HepG2 (cell line): ENCODE measurements at regions of chr3 and their contacts with region 1.

Region 1: GRCh38 chr3:2283818-2284217 is 185.2 kb downstream of the CNTN4 start:
- DNase-seq: no peak
- ATAC-seq: no peak
- H3K4me3 ChIP-seq: no peak overlapping the region
- H3K27ac ChIP-seq: no peak overlapping the region
- H3K4me1 ChIP-seq: no peaks in the 10 kb centered on the region
- H3K27me3 ChIP-seq: no peaks in the 10 kb centered on the region
- CTCF ChIP-seq: no peak
- EP300 ChIP-seq: no peak
- POLR2A ChIP-seq: no peak
- RAD21 ChIP-seq: no peak

Region 2: GRCh38 chr3:2106438-2106837 is 177.4 kb before region 1 on chr3:
- CTCF ChIA-PET with region 1: no interaction called
- POLR2A ChIA-PET with region 1: no interaction called
- in situ Hi-C with region 1: no loop called
- intact Hi-C with region 1: no loop called
- DNase-seq: no peak
- ATAC-seq: no peak
- H3K4me3 ChIP-seq: no peak overlapping the region
- H3K27ac ChIP-seq: no peak overlapping the region
- H3K4me1 ChIP-seq: no peaks in the 10 kb centered on the region
- H3K27me3 ChIP-seq: no peaks in the 10 kb centered on the region
- CTCF ChIP-seq: no peak
- EP300 ChIP-seq: no peak
- POLR2A ChIP-seq: no peak
- RAD21 ChIP-seq: no peak

Region 3: GRCh38 chr3:2334921-2335320 is 51.1 kb after region 1 on chr3:
- CTCF ChIA-PET with region 1: no interaction called
- POLR2A ChIA-PET with region 1: no interaction called
- in situ Hi-C with region 1: no loop called
- intact Hi-C with region 1: loop called (anchors 2 kb)
- DNase-seq: no peak
- ATAC-seq: no peak
- H3K4me3 ChIP-seq: no peak overlapping the region
- H3K27ac ChIP-seq: no peak overlapping the region
- H3K4me1 ChIP-seq: no peaks in the 10 kb centered on the region
- H3K27me3 ChIP-seq: no peaks in the 10 kb centered on the region
- CTCF ChIP-seq: no peak
- EP300 ChIP-seq: no peak
- POLR2A ChIP-seq: no peak
- RAD21 ChIP-seq: no peak

Region 4: GRCh38 chr3:2944628-2945027 is 660.8 kb after region 1 on chr3:
- CTCF ChIA-PET with region 1: no interaction called
- POLR2A ChIA-PET with region 1: no interaction called
- in situ Hi-C with region 1: no loop called
- intact Hi-C with region 1: no loop called
- DNase-seq: no peak
- ATAC-seq: no peak
- H3K4me3 ChIP-seq: no peak overlapping the region
- H3K27ac ChIP-seq: no peak overlapping the region
- H3K4me1 ChIP-seq: no peaks in the 10 kb centered on the region
- H3K27me3 ChIP-seq: peaks cover 0 to 1% of the 10 kb centered on the region in 2 experiments; a peak in 1 of 5 replicates
- CTCF ChIP-seq: no peak
- EP300 ChIP-seq: no peak
- POLR2A ChIP-seq: no peak
- RAD21 ChIP-seq: no peak